ENCODE measurements at regions of chr15 and their contacts with region 1.

Region 1: GRCh38 chr15:72117486-72118399 is at the start of gene MYO9A:
- DNase-seq: peak; percentile 100
- H3K4me3 Mint-ChIP-seq: peak within 1 kb of the TSS; percentile 98
- H3K27ac Mint-ChIP-seq: peak within 1 kb of the TSS; percentile 98
- H3K4me1 Mint-ChIP-seq: peaks cover 34% of the 10 kb centered on the region
- H3K27me3 Mint-ChIP-seq: no peaks in the 10 kb centered on the region
- total RNA-seq, gene MYO9A: 18.3 to 20.2 TPM

Region 2: DNA sequence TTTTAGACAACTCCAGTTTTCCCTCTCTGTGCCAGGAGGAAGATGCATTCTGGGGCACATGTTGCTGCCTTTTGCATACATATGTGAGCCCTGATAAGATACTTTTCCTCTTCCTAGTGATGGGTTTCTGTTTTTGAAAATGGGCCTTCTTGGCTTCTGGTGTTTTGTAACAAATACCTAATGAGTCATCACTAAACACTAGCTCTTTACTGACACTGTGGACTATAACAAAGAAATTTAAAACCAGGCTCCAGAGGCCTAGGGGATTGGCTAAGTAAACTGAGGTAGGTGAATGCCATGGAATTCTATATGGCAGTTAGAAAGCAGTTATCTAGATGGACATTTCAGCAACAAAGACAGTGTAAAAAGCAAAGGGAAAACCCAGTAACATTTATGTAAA is 400.8 kb before region 1 on chr15:
- CTCF ChIA-PET with region 1: no interaction called
- POLR2A ChIA-PET with region 1: no interaction called
- intact Hi-C with region 1: no loop called
- DNase-seq: no peak
- H3K4me3 Mint-ChIP-seq: no peak overlapping the region
- H3K27ac Mint-ChIP-seq: no peak overlapping the region
- H3K4me1 Mint-ChIP-seq: peaks cover 2% of the 10 kb centered on the region
- H3K27me3 Mint-ChIP-seq: peaks cover 7% of the 10 kb centered on the region

Region 3: GRCh38 chr15:72099155-72099554 is 18.6 kb before region 1 on chr15:
- CTCF ChIA-PET with region 1: no interaction called
- POLR2A ChIA-PET with region 1: no interaction called
- intact Hi-C with region 1: no loop called
- DNase-seq: no peak
- H3K4me3 Mint-ChIP-seq: no peak overlapping the region
- H3K27ac Mint-ChIP-seq: no peak overlapping the region
- H3K4me1 Mint-ChIP-seq: no peaks in the 10 kb centered on the region
- H3K27me3 Mint-ChIP-seq: no peaks in the 10 kb centered on the region

Region 4: DNA sequence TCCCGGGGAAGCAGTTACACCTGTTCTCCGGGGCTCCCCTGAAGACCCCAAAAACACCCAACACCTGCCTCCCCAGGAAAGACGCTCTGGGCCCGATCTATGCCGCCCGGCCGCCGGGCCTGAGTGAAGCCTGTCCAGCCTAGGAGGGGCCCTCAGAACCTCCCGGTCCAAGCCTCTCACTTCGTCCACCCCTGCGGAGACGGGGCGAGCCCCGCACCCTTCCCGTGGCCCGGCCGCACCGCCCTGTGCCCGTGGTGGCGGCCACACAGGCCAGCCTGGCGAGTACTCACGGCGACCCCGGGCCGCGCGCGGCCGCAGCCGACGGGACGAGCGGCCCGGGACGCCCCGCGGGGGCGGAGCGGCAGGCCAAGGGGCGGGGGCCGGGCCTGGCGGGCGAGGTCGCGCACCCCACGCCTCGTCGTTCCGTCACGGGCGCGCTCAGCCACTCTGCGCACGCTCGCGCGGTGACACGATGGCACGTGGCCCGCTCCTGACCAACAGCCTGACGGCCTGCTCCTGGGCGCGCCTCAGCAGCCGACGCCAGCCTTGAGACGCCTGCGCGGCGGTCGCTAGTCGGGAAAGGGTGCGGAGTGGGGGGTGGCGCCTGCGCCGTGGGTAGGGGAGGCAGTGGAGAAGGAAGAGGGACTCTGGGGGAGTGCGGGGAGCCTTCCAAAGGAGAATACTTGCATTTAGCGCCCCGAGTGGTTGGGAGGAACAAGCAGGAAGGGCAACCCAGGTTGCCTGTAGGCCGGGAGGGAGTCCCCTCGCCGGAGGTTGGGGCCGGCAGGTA is 154.7 kb after region 1 on chr15 and contains the start of gene PARP6:
- CTCF ChIA-PET with region 1: no interaction called
- POLR2A ChIA-PET with region 1: no interaction called
- intact Hi-C with region 1: loop called (anchors 5 kb)
- DNase-seq: peak; percentile 99
- H3K4me3 Mint-ChIP-seq: peak within 1 kb of the TSS; percentile 84
- H3K27ac Mint-ChIP-seq: peak within 1 kb of the TSS; percentile 89
- H3K4me1 Mint-ChIP-seq: peaks cover 33% of the 10 kb centered on the region
- H3K27me3 Mint-ChIP-seq: no peaks in the 10 kb centered on the region
- total RNA-seq, gene PARP6: 42.8 to 44.5 TPM

Measured in activated CD4-positive, alpha-beta memory T cell treated with anti-CD3 and anti-CD28 coated beads for 36 hours (primary cell).